Uterus (tissue), 4 donors: ENCODE measurements at regions of chr1 and their contacts with region 1.

Region 1: GRCh38 chr1:26035959-26036755 is 9.8 kb downstream of the SLC30A2 start:
- DNase-seq: peak; percentile 80 to 85
- H3K4me3 ChIP-seq: peak overlapping the region; percentile 61 to 79
- H3K27ac ChIP-seq: peak overlapping the region; percentile 81 to 90
- H3K4me1 ChIP-seq: peaks cover 0 to 7% of the 10 kb centered on the region in 2 donors
- H3K27me3 ChIP-seq: no peaks in the 10 kb centered on the region
- CTCF ChIP-seq: peak; percentile 98 to 100 (median 99)
- POLR2A ChIP-seq: no peak

Region 2: GRCh38 chr1:25819576-25820246 is 216.4 kb before region 1 on chr1 and contains the start of gene MTFR1L:
- intact Hi-C with region 1: no loop called
- DNase-seq: peak; percentile 82 to 87
- H3K4me3 ChIP-seq: peak within 1 kb of the TSS; percentile 66 to 92
- H3K27ac ChIP-seq: peak within 1 kb of the TSS; percentile 78 to 87
- H3K4me1 ChIP-seq: peaks cover 0 to 13% of the 10 kb centered on the region in 2 donors
- H3K27me3 ChIP-seq: no peaks in the 10 kb centered on the region
- CTCF ChIP-seq: peak in 1 of 4 experiments; percentile 26
- POLR2A ChIP-seq: peak; percentile 73 to 90
- total RNA-seq, gene MTFR1L: 51.5 to 106 (median 63.7) TPM

Region 3: DNA sequence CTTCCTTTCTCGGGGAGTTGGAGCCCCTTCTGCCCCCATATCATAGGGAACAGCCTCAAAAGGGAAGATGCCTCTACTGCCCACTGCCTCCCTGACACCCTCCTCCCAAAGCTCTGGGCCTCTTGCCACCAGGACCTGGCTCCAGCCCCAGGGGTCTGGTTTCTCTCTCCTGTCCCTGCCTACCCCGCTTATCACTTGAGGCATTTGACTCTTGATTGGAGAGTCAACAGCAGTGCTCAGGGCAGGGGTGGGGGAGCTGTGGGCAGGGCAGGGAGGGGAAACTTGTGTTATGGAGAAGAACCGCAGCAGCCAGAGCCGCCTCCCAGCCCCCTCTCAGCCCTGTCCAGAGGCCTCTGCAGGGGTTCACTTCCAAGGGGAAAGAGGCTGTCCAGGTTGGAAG is 30.7 kb after region 1 on chr1:
- intact Hi-C with region 1: no loop called
- DNase-seq: peak; percentile 50 to 66
- H3K4me3 ChIP-seq: no peak overlapping the region
- H3K27ac ChIP-seq: peak overlapping the region; percentile 70 to 73
- H3K4me1 ChIP-seq: no peaks in the 10 kb centered on the region
- H3K27me3 ChIP-seq: no peaks in the 10 kb centered on the region
- CTCF ChIP-seq: no peak
- POLR2A ChIP-seq: no peak

Region 4: GRCh38 chr1:26145041-26145959 is 109.1 kb after region 1 on chr1:
- intact Hi-C with region 1: loop called (anchors 5 kb)
- DNase-seq: peak; percentile 68 to 82
- H3K4me3 ChIP-seq: no peak overlapping the region
- H3K27ac ChIP-seq: no peak overlapping the region
- H3K4me1 ChIP-seq: no peaks in the 10 kb centered on the region
- H3K27me3 ChIP-seq: no peaks in the 10 kb centered on the region
- CTCF ChIP-seq: peak; percentile 76 to 81 (median 76)
- POLR2A ChIP-seq: no peak

Region 5: GRCh38 chr1:26161415-26162219 is 125.5 kb after region 1 on chr1:
- intact Hi-C with region 1: loop called (anchors 5 kb)
- DNase-seq: peak in 1 of 2 donors; percentile 47
- H3K4me3 ChIP-seq: peak overlapping the region; percentile 34 to 40
- H3K27ac ChIP-seq: peak overlapping the region; percentile 33 to 51
- H3K4me1 ChIP-seq: peaks cover 0 to 7% of the 10 kb centered on the region in 2 donors
- H3K27me3 ChIP-seq: no peaks in the 10 kb centered on the region
- CTCF ChIP-seq: peak in 2 of 4 experiments; percentile 22 to 32
- POLR2A ChIP-seq: no peak